Right ventricle myocardium superior (tissue), 1 donor: ENCODE measurements at regions of chr10 and their contacts with region 1.

Region 1: DNA sequence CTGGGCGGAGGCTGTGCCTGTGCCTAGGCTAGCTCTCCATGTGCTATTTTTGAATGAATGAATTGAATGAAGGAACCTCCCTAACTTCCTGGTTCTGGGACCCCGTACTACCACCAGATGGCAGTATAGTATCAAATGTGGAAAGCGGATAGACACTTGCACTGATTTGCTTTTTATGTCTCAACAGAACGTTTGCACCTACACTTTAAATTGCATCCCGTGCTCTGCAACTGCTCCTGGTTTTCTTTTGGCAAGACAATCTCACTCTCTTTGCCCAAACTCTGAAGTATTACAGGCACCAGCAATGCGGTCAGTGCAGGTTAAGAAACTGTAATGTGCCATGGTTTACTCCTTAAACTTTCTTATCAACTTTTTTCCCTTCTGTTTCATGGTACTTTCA is 6.5 kb downstream of the FZD8 start:
- DNase-seq: no peak
- ATAC-seq: peak; percentile 74

Region 2: GRCh38 chr10:36489611-36490228 is 854.1 kb after region 1 on chr10:
- intact Hi-C with region 1: loop called (anchors 10 kb)
- DNase-seq: peak; percentile 49
- ATAC-seq: peak; percentile 81

Region 3: DNA sequence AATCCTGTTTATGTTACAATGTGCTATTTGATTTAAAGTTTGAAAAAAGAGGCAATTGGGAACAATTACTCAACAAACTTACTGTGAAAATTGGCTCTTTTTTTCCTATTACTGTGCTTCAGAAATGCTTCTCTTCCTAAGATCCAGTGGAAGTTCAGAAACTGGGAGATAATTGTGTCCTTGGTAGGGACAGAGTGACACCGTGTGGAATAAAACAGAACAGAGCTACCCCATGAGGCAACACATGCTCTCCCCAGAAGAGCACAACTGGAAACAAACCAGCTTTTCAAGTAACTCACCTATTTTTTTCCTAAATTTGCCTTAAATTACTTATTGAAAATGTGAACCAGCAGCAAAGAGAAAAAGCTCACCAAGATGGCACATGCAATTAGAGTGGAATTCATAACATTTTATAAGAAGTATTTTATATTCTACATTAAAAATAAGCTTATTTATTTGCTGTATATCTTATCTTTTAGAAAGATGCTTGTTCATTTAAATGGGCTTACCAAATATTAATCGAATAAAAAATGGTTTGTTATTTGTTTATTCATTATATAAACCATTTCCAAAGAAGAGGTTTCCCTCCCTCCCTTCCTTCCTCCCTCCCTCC is 1143.8 kb after region 1 on chr10:
- intact Hi-C with region 1: loop called (anchors 2 kb)
- DNase-seq: no peak
- ATAC-seq: peak; percentile 92

Region 4: DNA sequence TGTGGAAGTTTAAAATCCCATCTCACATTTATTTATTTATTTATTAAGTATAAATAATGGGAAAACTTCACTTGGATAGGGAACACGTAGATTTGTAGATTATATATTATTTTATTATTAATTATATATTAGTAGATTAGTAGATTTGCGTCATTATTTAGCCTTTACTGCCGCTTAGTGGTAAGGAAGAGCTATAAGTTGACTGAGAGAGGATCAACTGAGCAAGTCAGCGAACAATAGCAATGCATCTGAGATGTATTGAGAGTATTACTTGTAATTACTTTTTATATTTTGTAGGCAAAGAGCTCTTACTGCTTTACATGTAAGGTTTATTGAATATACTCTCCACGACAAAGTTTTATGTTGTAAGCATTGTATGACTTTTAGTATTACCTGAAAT is 1245.3 kb after region 1 on chr10:
- intact Hi-C with region 1: loop called (anchors 5 kb)
- DNase-seq: no peak
- ATAC-seq: peak; percentile 51